MCF 10A (cell line): ENCODE measurements at regions of chr20 and their contacts with region 1.

Region 1: GRCh38 chr20:23420943-23421931 is at the start of gene NAPB:
- DNase-seq: peak; percentile 92
- H3K4me3 Mint-ChIP-seq: peak within 1 kb of the TSS; percentile 78
- H3K27ac Mint-ChIP-seq: peak within 1 kb of the TSS; percentile 90
- H3K4me1 Mint-ChIP-seq: peaks cover 9% of the 10 kb centered on the region
- H3K27me3 Mint-ChIP-seq: no peaks in the 10 kb centered on the region
- CTCF ChIP-seq: peak; percentile 39
- total RNA-seq, gene NAPB: 9.6 and 10.9 TPM in 2 replicates

Region 2: DNA sequence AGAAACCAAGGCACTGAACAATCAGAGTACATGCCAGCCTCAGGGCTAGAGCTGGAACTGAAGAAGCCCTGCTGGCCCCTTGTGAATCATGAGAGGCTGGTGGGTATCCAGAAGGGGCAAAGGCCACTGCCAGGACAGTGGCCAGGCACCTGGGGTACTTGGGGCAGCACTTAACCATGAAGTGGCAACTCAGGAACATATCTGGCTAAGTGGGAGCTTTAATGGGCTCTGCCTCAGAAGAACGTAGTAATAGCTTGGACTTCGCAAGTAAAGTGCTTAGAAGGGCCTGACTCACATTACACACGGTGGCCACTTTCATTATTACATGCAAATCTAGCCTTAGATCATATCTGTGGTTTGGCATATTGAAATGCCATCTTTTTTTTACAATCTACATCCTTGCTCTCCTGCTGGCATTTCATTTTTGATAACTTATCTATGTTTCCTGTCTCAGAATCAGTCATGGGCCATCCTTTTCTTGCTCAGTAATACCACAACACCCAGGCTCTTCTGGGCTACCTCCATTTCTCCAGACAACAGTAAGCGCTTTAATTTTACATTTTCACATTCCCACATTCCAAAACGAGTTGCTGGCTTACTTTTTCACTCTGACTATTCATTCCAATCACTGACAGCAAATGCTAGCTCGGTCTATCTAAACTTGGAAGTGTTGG is 21.5 kb before region 1 on chr20:
- CTCF ChIA-PET with region 1: interaction called, 15 read pairs
- POLR2A ChIA-PET with region 1: interaction called, 145 read pairs
- intact Hi-C with region 1: no loop called
- DNase-seq: no peak
- H3K4me3 Mint-ChIP-seq: no peak overlapping the region
- H3K27ac Mint-ChIP-seq: no peak overlapping the region
- H3K4me1 Mint-ChIP-seq: peaks cover 6% of the 10 kb centered on the region
- H3K27me3 Mint-ChIP-seq: no peaks in the 10 kb centered on the region
- CTCF ChIP-seq: no peak

Region 3: DNA sequence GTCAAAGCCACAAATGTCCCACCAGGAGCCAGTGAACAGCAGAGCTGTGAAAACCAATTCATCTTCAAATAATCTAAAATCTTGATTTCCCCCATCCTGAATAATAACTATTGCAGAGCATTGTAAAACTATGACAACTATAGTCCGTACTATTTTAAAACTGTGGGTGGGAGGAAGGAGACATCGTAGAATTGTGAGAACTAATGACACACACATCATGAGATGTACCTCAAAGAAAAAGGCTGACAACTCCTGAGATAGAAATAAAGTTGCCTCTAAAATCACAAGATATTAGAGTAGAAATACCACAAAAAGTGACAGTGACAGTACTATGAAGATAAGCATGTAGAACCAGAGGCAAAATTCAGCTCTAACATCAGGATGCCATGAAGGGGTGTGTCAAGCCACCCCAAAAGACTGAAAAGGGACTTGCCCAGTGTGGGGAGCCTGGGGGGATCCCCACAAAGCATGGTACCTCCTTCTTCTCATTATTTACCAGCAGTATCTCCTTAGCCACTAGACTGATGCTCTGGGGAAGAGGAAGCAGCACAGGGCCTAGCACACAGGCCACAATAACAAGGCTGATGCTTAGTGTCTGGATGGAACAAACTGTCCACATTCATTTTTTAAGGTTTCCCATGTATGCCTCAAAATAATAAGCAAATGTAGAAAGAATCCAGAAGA is 13.3 kb before region 1 on chr20:
- CTCF ChIA-PET with region 1: interaction called, 16 read pairs
- POLR2A ChIA-PET with region 1: interaction called, 145 read pairs
- intact Hi-C with region 1: no loop called
- DNase-seq: no peak
- H3K4me3 Mint-ChIP-seq: no peak overlapping the region
- H3K27ac Mint-ChIP-seq: no peak overlapping the region
- H3K4me1 Mint-ChIP-seq: peaks cover 25% of the 10 kb centered on the region
- H3K27me3 Mint-ChIP-seq: no peaks in the 10 kb centered on the region
- CTCF ChIP-seq: no peak

Region 4: GRCh38 chr20:23435626-23436539 is 14.6 kb after region 1 on chr20:
- CTCF ChIA-PET with region 1: interaction called, 60 read pairs
- POLR2A ChIA-PET with region 1: interaction called, 11 read pairs
- intact Hi-C with region 1: no loop called
- DNase-seq: no peak
- H3K4me3 Mint-ChIP-seq: no peak overlapping the region
- H3K27ac Mint-ChIP-seq: no peak overlapping the region
- H3K4me1 Mint-ChIP-seq: no peaks in the 10 kb centered on the region
- H3K27me3 Mint-ChIP-seq: no peaks in the 10 kb centered on the region
- CTCF ChIP-seq: no peak

Region 5: GRCh38 chr20:23456409-23456808 is 35.2 kb after region 1 on chr20:
- CTCF ChIA-PET with region 1: no interaction called
- POLR2A ChIA-PET with region 1: no interaction called
- intact Hi-C with region 1: no loop called
- DNase-seq: no peak
- H3K4me3 Mint-ChIP-seq: no peak overlapping the region
- H3K27ac Mint-ChIP-seq: no peak overlapping the region
- H3K4me1 Mint-ChIP-seq: no peaks in the 10 kb centered on the region
- H3K27me3 Mint-ChIP-seq: no peaks in the 10 kb centered on the region
- CTCF ChIP-seq: no peak

Region 6: DNA sequence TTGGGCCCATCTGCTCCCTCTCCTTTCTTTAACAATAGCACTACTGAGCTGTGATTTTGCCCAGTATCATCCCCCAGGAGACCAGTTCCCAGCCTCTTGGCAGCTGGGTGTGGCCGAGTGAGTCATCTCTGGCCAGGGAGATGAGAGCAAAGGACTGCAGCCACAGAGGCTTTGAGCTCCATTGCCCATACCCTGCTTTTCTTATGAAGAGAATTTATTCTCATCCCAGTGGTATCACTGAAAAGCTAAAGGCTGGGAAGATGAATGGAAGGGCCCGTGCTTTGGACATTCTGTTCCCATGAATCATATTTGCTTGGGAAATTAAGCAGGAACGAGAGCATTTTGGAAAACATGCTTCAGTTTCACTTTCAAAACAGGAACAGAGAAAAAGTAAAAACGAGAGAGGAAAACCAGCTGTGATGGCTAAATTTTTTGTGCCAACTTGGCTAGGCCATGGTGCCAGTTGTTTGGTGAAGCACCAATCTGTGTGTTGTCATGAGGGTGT is 201.7 kb after region 1 on chr20:
- CTCF ChIA-PET with region 1: no interaction called
- POLR2A ChIA-PET with region 1: interaction called, 37 read pairs
- intact Hi-C with region 1: loop called (anchors 5 kb)
- DNase-seq: peak; percentile 94
- H3K4me3 Mint-ChIP-seq: peak overlapping the region; percentile 61
- H3K27ac Mint-ChIP-seq: peak overlapping the region; percentile 92
- H3K4me1 Mint-ChIP-seq: peaks cover 43% of the 10 kb centered on the region
- H3K27me3 Mint-ChIP-seq: no peaks in the 10 kb centered on the region
- CTCF ChIP-seq: no peak

Region 7: GRCh38 chr20:23629017-23629541 is 207.8 kb after region 1 on chr20:
- CTCF ChIA-PET with region 1: no interaction called
- POLR2A ChIA-PET with region 1: interaction called, 37 read pairs
- intact Hi-C with region 1: loop called (anchors 5 kb)
- DNase-seq: peak; percentile 96
- H3K4me3 Mint-ChIP-seq: no peak overlapping the region
- H3K27ac Mint-ChIP-seq: peak overlapping the region; percentile 92
- H3K4me1 Mint-ChIP-seq: peaks cover 37% of the 10 kb centered on the region
- H3K27me3 Mint-ChIP-seq: no peaks in the 10 kb centered on the region
- CTCF ChIP-seq: no peak

Region 8: DNA sequence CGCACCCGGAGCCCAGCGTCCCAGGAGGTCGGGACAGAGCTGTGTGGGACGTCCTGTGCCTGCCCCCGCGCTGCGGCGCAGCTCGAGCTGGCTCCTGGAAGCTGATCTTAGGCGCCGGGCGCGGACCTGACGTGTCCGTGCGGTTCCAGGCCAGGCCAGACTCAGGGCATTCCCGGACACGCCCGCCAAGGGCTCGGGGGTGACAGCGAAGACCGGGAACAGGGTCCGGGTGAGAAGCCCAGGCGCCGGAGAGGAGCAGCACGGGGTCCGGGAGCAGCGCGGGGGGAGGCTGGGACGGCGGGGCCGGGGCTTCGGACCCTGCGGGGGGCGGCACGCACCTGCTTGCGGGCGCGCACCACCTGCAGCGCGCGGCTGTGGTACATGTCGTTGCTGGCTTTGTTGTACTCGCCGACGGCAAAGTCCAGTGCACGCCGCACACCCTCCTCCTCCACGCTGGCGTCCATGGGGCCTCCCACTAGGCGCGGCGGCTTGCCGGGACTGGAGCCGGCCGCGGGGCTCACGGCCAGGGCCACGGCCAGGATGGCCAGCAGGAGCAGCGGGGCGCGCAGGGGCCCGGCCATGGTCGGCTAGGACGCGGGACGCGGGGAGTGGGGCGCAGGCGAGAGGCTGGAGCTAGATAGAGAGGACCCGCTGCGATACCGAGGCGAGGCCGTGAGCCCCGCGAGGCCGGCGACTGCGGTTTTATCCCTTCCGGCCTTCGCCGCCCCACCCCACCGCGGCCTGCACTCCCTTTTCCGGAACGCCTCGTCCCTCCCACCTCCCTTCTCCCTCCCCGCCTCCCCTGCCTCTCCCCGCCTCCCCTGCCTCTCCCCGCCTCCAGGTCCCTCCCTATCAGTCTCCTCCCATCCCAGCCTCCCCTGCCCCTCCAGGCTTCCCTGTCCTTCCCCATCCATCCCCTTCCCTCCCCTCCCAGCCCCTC is 216.3 kb after region 1 on chr20 and contains the start of gene CST3:
- CTCF ChIA-PET with region 1: no interaction called
- POLR2A ChIA-PET with region 1: interaction called, 16 read pairs
- intact Hi-C with region 1: no loop called
- DNase-seq: peak; percentile 91
- H3K4me3 Mint-ChIP-seq: peak within 1 kb of the TSS; percentile 91
- H3K27ac Mint-ChIP-seq: peak within 1 kb of the TSS; percentile 90
- H3K4me1 Mint-ChIP-seq: peaks cover 42% of the 10 kb centered on the region
- H3K27me3 Mint-ChIP-seq: no peaks in the 10 kb centered on the region
- CTCF ChIP-seq: no peak
- total RNA-seq, gene CST3: 303 and 315 TPM in 2 replicates